PC-3 (cell line): ENCODE measurements at regions of chr4 and their contacts with region 1.

Region 1: GRCh38 chr4:56435306-56435926 is at the start of gene PPAT:
- DNase-seq: peak; percentile 99
- ATAC-seq: peak; percentile 78
- H3K4me3 ChIP-seq: peak within 1 kb of the TSS; percentile 79
- H3K27ac ChIP-seq: peak within 1 kb of the TSS; percentile 80
- H3K4me1 ChIP-seq: peaks cover 36% of the 10 kb centered on the region
- H3K27me3 ChIP-seq: no peaks in the 10 kb centered on the region
- CTCF ChIP-seq: no peak
- total RNA-seq, gene PPAT: 31.7 and 35.9 TPM in 2 replicates

Region 2: GRCh38 chr4:55754754-55755350 is 680.6 kb before region 1 on chr4:
- CTCF ChIA-PET with region 1: interaction called, 16 read pairs
- POLR2A ChIA-PET with region 1: no interaction called
- intact Hi-C with region 1: no loop called
- DNase-seq: peak; percentile 80
- ATAC-seq: peak; percentile 69
- H3K4me3 ChIP-seq: no peak overlapping the region
- H3K27ac ChIP-seq: peak overlapping the region; percentile 1; the same call in 1 of the 2 replicates
- H3K4me1 ChIP-seq: peaks cover 22% of the 10 kb centered on the region
- H3K27me3 ChIP-seq: no peaks in the 10 kb centered on the region
- CTCF ChIP-seq: no peak

Region 3: DNA sequence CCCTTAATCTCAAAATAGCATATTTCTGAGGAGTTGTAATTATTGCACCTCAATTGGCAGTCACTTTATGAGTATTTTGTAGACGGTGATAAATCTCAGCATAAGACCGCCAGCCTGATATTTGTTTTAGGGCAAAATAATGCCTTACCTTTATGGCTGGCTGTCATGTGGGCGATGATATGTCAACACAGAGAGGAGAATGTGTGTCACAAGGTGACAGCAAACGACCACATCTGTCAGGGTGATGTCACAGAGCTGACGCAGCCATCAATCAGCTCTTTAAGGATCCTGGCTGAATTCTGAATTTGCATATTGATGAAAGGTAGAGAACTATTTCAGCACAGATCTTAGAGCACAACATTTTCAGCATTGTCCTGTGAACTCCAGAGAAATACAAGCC is 276.9 kb before region 1 on chr4:
- CTCF ChIA-PET with region 1: no interaction called
- POLR2A ChIA-PET with region 1: no interaction called
- intact Hi-C with region 1: no loop called
- DNase-seq: no peak
- ATAC-seq: no peak
- H3K4me3 ChIP-seq: no peak overlapping the region
- H3K27ac ChIP-seq: no peak overlapping the region
- H3K4me1 ChIP-seq: no peaks in the 10 kb centered on the region
- H3K27me3 ChIP-seq: 0 out of 2 replicates have a peak, but pooled peaks cover 4% of the 10 kb centered on the region
- CTCF ChIP-seq: no peak

Region 4: DNA sequence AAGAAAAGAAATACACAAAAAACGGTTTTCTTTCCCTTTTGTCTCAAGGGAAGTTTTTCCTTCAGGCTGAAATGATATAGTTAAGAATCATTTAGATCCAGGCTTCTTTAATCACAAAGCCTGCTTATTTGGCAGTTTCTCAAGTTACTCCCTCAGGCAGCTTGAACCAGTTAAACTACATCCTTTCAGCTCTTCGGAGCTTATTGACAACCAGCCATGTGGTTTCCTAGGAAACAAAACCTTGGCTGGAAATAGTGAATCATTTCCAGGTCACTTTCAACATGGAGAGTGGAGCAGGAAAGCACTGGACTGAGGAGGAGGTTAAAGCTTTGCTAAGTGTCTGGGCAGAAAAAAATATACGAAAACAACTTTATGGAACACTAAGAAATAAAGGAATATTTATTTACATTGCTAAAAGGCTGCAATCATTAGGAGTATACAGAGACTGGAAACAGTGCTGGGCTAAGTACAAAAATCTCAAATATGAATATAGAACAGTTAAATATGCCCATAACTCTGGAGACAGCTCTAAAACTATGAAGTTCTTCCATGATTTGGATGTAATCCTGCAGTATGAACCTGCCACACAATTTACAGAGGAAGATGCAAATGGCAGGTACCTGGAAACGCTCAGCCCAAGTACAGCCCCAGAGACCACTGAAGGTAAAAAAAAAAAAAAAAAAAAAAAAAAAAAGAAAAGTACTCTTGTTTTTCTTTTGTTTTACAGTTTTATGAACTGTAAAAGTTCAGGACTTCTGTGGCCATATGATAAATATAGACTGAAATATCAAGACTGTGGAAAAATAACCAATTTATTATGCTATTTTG is 25.0 kb before region 1 on chr4:
- CTCF ChIA-PET with region 1: no interaction called
- POLR2A ChIA-PET with region 1: interaction called, 3 read pairs
- intact Hi-C with region 1: loop called (anchors 1 kb)
- DNase-seq: peak; percentile 100
- ATAC-seq: peak; percentile 88
- H3K4me3 ChIP-seq: peak overlapping the region; percentile 46
- H3K27ac ChIP-seq: peak overlapping the region; percentile 65
- H3K4me1 ChIP-seq: peaks cover 25% of the 10 kb centered on the region
- H3K27me3 ChIP-seq: no peaks in the 10 kb centered on the region
- CTCF ChIP-seq: no peak

Region 5: DNA sequence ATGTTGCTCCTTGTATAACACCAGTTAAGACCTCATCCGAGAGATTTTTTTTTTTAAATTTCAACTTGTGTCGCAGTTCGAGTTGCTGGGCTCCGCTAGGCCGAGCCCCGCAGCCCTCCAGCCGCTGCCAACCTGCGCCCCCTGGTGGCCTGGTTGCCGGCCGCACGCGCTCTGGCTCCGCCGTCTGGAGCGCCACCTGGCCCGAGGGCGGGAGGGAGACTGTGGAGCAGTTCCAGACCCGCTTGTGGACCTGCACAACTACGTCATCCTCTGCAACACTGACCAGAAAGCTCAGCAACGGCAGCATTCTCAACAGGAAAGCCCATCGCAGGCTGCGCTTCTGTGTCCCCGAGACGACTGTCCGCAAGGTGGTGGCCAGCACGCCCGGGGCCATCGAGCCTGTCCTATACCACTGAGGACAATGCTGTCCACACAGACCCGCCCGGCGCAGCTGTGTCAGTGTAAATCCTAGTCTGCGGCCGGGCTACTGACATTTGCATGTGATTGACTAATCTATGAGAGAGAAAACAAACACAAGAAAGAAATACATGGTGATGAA is 109.2 kb after region 1 on chr4:
- CTCF ChIA-PET with region 1: interaction called, 4 read pairs
- POLR2A ChIA-PET with region 1: no interaction called
- intact Hi-C with region 1: loop called (anchors 2 kb)
- DNase-seq: peak; percentile 95
- ATAC-seq: peak; percentile 97
- H3K4me3 ChIP-seq: peak overlapping the region; percentile 69
- H3K27ac ChIP-seq: no peak overlapping the region
- H3K4me1 ChIP-seq: peaks cover 5% of the 10 kb centered on the region; the same call in 1 of the 2 replicates
- H3K27me3 ChIP-seq: no peaks in the 10 kb centered on the region
- CTCF ChIP-seq: peak; percentile 99

Region 6: DNA sequence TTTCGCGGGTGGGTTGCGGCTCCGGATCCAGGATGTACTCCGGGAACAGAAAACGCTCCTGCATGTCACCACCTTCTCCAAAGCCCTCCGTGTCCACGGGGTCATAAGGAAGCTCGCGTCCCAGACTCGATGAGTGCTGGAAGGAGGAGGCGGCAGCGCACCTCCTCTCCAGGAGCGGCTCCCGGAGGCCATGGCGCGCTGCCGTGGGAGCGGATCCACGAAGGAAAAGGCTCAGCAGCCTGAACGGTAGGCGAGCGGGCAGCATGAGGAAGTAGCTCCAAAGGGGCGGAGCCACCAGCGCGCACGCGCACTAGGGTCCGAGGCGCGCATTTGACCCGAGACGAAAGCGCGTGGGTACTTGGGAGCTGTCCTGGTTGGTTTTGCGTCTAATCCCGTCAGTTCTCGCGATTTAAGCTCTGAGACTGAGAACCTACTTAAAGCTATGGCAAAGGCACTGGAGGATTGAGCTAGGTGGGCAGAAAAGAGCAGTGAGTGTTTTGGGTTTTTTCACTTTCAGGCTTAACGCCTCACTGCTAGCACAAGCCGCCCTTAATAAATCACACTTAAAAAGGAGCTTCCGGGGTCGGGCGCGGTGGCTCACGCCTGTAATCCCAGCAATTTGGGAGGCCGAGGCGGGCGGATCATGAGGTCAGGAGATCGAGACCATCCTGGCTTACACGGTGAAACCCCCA is 542.1 kb after region 1 on chr4 and contains the start of gene NOA1:
- CTCF ChIA-PET with region 1: no interaction called
- POLR2A ChIA-PET with region 1: no interaction called
- intact Hi-C with region 1: loop called (anchors 5 kb)
- DNase-seq: peak; percentile 99
- ATAC-seq: peak; percentile 68
- H3K4me3 ChIP-seq: peak within 1 kb of the TSS; percentile 98
- H3K27ac ChIP-seq: peak within 1 kb of the TSS; percentile 79
- H3K4me1 ChIP-seq: peaks cover 31% of the 10 kb centered on the region
- H3K27me3 ChIP-seq: no peaks in the 10 kb centered on the region
- CTCF ChIP-seq: no peak
- total RNA-seq, gene NOA1: 33.1 and 37.7 TPM in 2 replicates